GM13976 (cell line): ENCODE measurements at regions of chr3 and their contacts with region 1.

Region 1: DNA sequence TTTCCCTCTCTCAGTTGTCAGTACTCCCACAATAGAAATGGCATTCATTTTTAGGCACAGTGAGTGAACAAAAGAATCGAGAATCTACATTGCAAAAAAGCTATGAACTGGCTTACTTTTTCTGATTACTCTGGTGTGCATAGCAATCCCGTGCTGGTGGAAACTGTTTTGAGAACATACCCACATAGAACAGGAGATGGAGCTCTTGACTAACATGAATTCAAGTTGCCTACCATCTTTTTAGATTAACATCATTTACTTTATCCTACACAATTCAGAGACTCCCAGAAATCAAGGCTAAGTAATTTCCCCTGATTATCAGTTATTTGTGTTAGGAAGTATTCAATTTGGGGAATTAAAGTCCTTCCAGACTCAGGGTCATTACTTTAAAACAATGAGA is 326.6 kb downstream of the ARPP21 start:
- DNase-seq: no peak
- CTCF ChIP-seq: peak; percentile 13

Region 2: DNA sequence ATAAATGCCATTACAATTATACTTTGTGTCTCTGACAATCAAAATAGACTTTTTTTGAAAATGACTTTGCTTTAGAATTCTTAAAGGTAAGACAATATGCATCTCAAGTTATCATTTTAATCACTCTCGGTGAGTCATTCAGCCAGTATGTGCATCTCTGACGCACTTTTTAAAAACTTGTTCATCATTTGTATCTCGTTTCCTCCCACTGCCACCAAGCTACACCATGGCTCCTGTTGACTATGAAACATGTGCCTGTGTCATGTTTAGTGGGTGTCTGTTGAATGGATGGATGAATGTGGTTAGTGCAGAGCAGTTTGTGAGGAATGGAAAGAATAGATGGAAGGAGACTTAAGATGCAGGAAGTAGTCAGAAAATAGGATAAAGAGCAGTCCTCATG is 258.0 kb before region 1 on chr3:
- in situ Hi-C with region 1: no loop called
- DNase-seq: no peak
- CTCF ChIP-seq: no peak

Region 3: GRCh38 chr3:36282766-36283165 is 316.9 kb after region 1 on chr3:
- in situ Hi-C with region 1: no loop called
- DNase-seq: no peak
- CTCF ChIP-seq: no peak

Region 4: DNA sequence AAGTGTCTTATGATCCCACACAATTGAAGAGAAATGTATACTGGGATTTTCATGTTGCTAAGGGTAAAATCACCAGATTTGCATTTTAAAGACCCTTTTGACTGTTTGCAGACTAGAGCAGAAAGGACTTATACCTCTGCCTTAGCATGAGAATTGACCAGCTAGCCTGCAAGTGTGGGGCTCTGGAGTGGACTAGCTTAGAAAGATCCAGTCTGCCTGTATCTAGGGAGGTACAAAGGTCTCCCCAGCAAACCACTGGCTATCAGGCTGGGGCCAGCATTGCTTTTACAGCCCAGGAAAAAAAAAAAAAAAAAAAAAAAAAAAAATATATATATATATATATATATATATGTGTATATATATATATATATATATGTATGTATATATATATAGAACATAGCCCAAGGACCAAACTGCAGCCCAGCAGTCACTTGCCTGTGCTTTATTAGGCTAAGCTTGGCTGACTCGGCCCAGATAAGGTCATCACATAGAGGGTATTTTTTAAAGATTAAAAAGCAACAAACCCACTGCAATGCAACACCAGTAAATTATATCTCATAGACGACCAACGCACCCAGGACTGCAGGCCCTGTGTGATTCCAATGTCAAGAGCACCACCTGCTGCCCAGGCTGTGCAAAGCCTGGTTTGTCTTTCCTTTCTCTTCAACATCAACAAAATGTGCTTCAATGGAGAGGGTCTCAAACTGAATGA is 734.8 kb after region 1 on chr3:
- in situ Hi-C with region 1: loop called (anchors 25 kb)
- DNase-seq: peak; percentile 60
- CTCF ChIP-seq: peak; percentile 67